ENCODE measurements at regions of chr2 and their contacts with region 1.

Region 1: GRCh38 chr2:84905181-84906107 is at the start of gene TMSB10:
- DNase-seq: peak; percentile 97
- H3K4me3 Mint-ChIP-seq: peak within 1 kb of the TSS; percentile 91
- H3K27ac Mint-ChIP-seq: peak within 1 kb of the TSS; percentile 95
- H3K4me1 Mint-ChIP-seq: peaks cover 62% of the 10 kb centered on the region
- H3K27me3 Mint-ChIP-seq: no peaks in the 10 kb centered on the region
- total RNA-seq, gene TMSB10: 2,196 and 2,218 TPM in 2 replicates

Region 2: GRCh38 chr2:84417453-84418145 is 487.8 kb before region 1 on chr2:
- intact Hi-C with region 1: no loop called
- DNase-seq: no peak
- H3K4me3 Mint-ChIP-seq: no peak overlapping the region
- H3K27ac Mint-ChIP-seq: no peak overlapping the region
- H3K4me1 Mint-ChIP-seq: peaks cover 4% of the 10 kb centered on the region
- H3K27me3 Mint-ChIP-seq: peaks cover 6% of the 10 kb centered on the region

Region 3: DNA sequence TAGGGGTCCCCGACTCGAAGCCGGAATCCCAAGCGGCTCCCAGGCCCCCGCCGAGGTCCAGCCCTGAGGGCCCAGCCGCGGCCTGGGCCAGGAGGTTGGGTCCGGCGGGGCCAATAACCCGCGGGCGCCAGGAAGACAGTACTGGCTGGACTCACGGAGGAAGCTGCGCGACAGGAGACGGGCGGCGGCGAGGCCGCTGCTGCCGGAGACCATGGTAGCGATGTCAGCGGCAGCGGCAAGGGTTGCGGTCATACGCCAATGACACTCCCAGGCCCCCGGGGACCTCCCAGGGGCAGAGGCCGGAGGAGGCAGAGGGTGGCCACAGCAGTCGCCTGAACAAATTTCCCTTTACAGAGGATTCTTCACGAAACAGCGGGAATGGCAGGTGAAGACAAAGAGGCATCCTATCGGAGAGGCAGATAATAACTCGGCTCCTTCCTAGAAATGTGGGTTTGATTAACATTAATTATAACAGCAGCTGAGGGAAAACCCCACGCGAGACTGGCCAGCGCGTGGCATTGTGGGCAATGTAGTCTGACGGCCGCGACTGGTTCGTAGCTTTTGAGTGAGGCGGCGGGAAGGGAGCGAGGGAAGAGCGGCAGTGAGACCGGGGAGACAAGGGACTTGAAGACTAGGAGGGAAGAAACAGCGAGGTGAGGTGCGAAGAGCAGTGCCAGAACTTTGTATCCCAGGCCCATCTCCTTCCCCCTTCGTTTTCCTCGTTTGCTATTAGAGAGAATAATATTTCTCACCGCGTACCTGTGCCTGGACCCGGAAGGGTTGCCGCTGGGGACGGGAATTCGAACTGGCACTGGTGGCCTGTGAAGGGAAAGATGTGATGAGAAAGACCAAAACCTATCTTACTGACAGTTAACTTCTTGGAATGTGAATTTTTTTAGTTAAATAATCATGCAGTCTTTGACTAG is 446.2 kb before region 1 on chr2 and contains the start of gene SUCLG1:
- intact Hi-C with region 1: loop called (anchors 1 kb)
- DNase-seq: peak; percentile 96
- H3K4me3 Mint-ChIP-seq: peak within 1 kb of the TSS; percentile 94
- H3K27ac Mint-ChIP-seq: peak within 1 kb of the TSS; percentile 97
- H3K4me1 Mint-ChIP-seq: peaks cover 33% of the 10 kb centered on the region
- H3K27me3 Mint-ChIP-seq: no peaks in the 10 kb centered on the region
- total RNA-seq, gene SUCLG1: 71.9 and 72.6 TPM in 2 replicates

Region 4: DNA sequence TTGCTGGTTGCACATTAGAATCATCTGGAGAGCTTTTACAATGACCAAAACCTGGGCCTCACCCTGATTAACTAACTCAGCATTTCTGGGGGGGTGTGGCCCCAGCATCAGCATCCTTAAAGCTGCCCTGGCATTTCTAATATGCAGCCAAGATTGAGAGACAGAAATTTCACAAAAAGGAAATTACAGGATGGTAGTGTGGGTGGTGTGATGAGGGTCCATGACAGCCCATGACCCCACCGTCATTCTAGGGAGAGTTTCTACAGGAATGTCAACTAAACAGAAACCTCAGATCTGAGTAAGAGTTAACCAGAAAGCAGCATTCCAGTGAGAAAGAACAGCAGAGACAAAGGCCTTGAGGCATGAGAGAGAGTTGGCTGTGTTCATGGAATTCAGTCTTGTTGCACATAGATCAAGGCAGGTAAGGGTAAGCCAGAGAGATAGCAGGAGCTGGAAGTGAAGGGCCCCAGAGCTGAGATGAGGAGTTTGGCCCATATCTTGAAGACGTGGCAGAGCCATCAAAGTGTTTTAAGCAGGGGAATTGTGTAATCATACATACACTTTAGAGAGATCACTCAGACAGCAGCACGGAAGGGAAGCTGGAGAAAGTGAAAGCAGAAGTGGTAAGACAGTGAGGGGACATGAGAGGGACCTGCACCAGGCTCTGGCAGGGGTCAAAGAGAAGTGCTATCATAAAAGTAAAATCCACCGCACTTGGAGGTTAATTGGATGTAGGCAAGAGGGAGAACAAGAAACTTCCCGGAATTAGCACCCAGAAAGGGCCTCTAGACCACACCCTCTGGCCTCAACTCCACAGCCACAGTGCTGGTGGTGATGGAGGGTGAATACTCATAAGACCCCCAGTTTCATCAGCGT is 16.8 kb before region 1 on chr2:
- intact Hi-C with region 1: loop called (anchors 1 kb)
- DNase-seq: peak; percentile 89
- H3K4me3 Mint-ChIP-seq: peak overlapping the region; percentile 68
- H3K27ac Mint-ChIP-seq: peak overlapping the region; percentile 91
- H3K4me1 Mint-ChIP-seq: peaks cover 42% of the 10 kb centered on the region
- H3K27me3 Mint-ChIP-seq: no peaks in the 10 kb centered on the region

Region 5: DNA sequence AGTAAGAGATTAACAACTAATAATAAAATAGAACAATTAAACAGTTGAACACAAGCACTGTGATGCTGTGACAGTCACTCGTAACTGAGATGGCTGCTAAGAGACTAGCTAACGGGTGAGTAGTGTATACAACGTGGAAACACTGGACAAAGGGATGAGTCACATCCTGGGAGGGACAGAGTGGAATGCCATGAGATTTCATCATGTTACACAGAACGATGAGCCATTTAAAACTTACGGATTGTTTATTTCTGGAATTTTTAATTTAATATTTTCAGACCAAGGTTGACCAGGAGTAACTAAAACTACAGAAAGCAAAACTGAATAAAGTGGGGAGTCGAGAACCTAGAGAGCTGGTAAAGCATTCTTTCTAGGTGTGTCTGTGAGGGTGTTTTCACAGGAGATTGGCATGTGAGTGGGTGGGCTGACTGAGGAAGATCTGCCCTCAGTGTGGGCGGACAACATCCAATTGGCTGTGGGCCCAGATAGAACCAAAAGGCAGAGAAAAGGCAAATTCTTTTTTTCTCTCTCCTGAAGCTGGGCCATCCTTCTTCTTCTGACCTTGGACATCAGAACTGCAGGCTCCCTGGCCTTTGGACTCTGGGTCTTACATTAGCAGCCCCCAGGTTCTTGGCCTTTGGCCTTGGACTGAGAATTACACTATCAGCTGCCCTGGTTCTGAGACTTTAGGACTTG is 14.6 kb after region 1 on chr2:
- intact Hi-C with region 1: loop called (anchors 1 kb)
- DNase-seq: peak; percentile 80
- H3K4me3 Mint-ChIP-seq: peak overlapping the region; percentile 72
- H3K27ac Mint-ChIP-seq: peak overlapping the region; percentile 84
- H3K4me1 Mint-ChIP-seq: peaks cover 36% of the 10 kb centered on the region
- H3K27me3 Mint-ChIP-seq: no peaks in the 10 kb centered on the region

Region 6: GRCh38 chr2:84939426-84940087 is 34.1 kb after region 1 on chr2:
- intact Hi-C with region 1: loop called (anchors 1 kb)
- DNase-seq: peak; percentile 95
- H3K4me3 Mint-ChIP-seq: peak overlapping the region; percentile 84
- H3K27ac Mint-ChIP-seq: peak overlapping the region; percentile 98
- H3K4me1 Mint-ChIP-seq: peaks cover 45% of the 10 kb centered on the region
- H3K27me3 Mint-ChIP-seq: no peaks in the 10 kb centered on the region

Measured in activated CD4-positive, alpha-beta T cell treated with anti-CD3 and anti-CD28 coated beads, Interleukin-2, amount 10 ng/mL, durations not matched to agents 24 days and 14 days (primary cell).